ENCODE measurements at regions of chr3 and their contacts with region 1.

Region 1: DNA sequence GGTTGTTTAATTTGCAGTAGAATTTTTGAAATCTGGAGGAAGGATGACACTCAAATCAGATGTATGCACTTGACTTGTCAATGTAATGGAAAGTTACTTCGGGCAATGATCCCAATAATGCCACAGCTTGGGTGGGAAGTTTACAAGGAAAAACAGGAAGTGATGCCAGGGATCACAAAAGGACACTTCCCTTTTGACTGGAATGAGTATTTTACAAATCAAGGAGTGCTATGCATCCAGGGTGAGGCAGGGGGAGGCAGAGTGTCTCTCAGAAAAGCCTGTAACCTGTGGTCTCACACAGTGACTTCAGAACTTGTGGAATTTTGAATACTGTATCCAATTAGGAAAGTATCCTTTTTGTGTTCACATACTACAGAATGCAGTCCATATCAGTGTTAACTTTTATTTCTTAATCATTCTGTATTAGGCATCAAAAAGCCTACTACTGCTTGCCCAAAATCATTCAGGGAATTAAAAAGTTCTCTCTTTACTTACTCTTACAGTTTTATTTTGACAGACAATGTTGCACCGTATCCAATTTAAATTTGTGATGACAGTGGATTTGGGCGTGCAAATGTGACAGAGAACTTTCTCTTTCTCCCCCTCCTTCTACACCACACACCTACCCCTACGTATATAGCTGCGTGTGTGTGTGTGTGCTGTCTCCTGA is 445.1 kb downstream of the MECOM start:
- DNase-seq: peak; percentile 71
- ATAC-seq: peak; percentile 95
- H3K4me3 ChIP-seq: no peak overlapping the region
- H3K27ac ChIP-seq: no peak overlapping the region
- H3K4me1 ChIP-seq: no peaks in the 10 kb centered on the region
- H3K27me3 ChIP-seq: no peaks in the 10 kb centered on the region
- CTCF ChIP-seq: peak; percentile 85
- POLR2A ChIP-seq: no peak
- RAD21 ChIP-seq: peak; percentile 88

Region 2: GRCh38 chr3:169295126-169295525 is 76.7 kb after region 1 on chr3:
- CTCF ChIA-PET with region 1: no interaction called
- POLR2A ChIA-PET with region 1: no interaction called
- dilution Hi-C with region 1: no loop called
- in situ Hi-C with region 1: no loop called
- intact Hi-C with region 1: loop called (anchors 2 kb)
- DNase-seq: peak; percentile 42
- ATAC-seq: no peak
- H3K4me3 ChIP-seq: no peak overlapping the region
- H3K27ac ChIP-seq: no peak overlapping the region
- H3K4me1 ChIP-seq: no peaks in the 10 kb centered on the region
- H3K27me3 ChIP-seq: peaks cover 2% of the 10 kb centered on the region; the same call in 1 of the 2 replicates
- CTCF ChIP-seq: peak; percentile 66
- POLR2A ChIP-seq: no peak
- RAD21 ChIP-seq: peak; percentile 67

Region 3: GRCh38 chr3:169390271-169391230 is 172.1 kb after region 1 on chr3:
- CTCF ChIA-PET with region 1: no interaction called
- POLR2A ChIA-PET with region 1: no interaction called
- dilution Hi-C with region 1: no loop called
- in situ Hi-C with region 1: no loop called
- intact Hi-C with region 1: loop called (anchors 5 kb)
- DNase-seq: no peak
- ATAC-seq: peak; percentile 31; the same call in 1 of the 2 replicates
- H3K4me3 ChIP-seq: no peak overlapping the region
- H3K27ac ChIP-seq: no peak overlapping the region
- H3K4me1 ChIP-seq: peaks cover 1% of the 10 kb centered on the region; the same call in 1 of the 2 replicates
- H3K27me3 ChIP-seq: no peaks in the 10 kb centered on the region
- CTCF ChIP-seq: no peak
- POLR2A ChIP-seq: no peak
- RAD21 ChIP-seq: no peak

Region 4: DNA sequence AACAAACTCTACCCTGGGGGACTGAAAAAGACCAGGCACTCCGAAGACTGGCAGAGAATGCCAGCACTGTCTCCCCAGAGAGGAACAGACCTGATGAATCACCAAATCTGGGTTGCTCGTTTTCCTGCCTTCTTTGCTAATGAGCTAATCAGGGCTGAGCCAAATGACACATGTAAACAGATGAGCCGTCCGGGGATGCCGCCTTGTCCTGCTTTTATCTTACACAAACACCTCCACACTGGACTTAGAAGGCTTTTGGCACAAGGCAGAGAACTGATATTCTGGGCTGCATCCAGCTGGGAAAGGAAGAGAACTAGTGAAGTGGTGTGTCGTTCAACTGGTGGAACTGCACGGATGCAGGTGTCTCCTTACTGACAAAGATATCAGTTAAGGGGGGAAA is 356.9 kb after region 1 on chr3:
- CTCF ChIA-PET with region 1: no interaction called
- POLR2A ChIA-PET with region 1: no interaction called
- dilution Hi-C with region 1: no loop called
- in situ Hi-C with region 1: no loop called
- intact Hi-C with region 1: loop called (anchors 10 kb)
- DNase-seq: peak; percentile 45
- ATAC-seq: peak; percentile 66
- H3K4me3 ChIP-seq: no peak overlapping the region
- H3K27ac ChIP-seq: no peak overlapping the region
- H3K4me1 ChIP-seq: no peaks in the 10 kb centered on the region; the same call in 1 of the 2 replicates
- H3K27me3 ChIP-seq: no peaks in the 10 kb centered on the region
- CTCF ChIP-seq: no peak
- POLR2A ChIP-seq: no peak
- RAD21 ChIP-seq: no peak

Region 5: DNA sequence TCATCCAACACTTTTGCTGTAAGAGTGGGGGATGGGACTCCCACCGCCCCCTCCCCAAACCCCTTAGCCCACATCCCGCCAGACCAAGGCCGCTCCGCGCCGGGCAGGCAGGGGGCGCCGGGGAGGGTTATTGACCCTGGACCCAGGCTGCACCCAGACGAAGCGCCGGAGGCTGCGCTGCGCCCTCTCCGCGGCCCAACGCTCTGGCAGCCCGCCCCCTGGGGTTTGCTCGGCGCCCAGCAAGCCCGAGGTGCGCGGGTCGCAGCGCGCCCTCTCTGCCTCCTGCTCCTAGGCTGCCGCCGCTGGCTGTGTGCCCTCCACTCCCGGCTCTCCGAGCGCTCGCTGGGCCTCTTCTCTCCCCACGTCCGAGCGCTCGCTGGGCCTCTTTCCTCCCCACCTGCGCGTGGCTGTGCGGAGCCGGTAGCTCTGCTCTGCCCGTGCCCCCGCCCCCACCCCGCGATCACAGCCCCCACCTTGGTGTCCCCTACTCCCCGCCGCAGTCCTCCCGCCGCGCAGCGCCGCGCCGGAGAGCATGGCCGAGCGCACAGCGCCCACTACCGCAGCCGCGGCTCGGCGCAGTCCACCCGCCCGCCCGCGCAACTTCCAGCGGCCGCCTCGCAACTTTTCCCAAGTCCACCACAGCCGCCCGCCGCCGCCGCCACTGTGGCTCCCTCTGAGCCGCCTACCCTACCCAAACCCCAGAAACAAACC is 443.8 kb after region 1 on chr3:
- CTCF ChIA-PET with region 1: interaction called, 3 read pairs
- POLR2A ChIA-PET with region 1: no interaction called
- dilution Hi-C with region 1: no loop called
- in situ Hi-C with region 1: no loop called
- intact Hi-C with region 1: loop called (anchors 1 kb)
- DNase-seq: peak; percentile 57
- ATAC-seq: peak; percentile 86
- H3K4me3 ChIP-seq: peak overlapping the region; percentile 68
- H3K27ac ChIP-seq: peak overlapping the region; percentile 36
- H3K4me1 ChIP-seq: no peaks in the 10 kb centered on the region
- H3K27me3 ChIP-seq: peaks cover 35% of the 10 kb centered on the region
- CTCF ChIP-seq: peak; percentile 60
- POLR2A ChIP-seq: no peak
- RAD21 ChIP-seq: peak; percentile 61

Region 6: DNA sequence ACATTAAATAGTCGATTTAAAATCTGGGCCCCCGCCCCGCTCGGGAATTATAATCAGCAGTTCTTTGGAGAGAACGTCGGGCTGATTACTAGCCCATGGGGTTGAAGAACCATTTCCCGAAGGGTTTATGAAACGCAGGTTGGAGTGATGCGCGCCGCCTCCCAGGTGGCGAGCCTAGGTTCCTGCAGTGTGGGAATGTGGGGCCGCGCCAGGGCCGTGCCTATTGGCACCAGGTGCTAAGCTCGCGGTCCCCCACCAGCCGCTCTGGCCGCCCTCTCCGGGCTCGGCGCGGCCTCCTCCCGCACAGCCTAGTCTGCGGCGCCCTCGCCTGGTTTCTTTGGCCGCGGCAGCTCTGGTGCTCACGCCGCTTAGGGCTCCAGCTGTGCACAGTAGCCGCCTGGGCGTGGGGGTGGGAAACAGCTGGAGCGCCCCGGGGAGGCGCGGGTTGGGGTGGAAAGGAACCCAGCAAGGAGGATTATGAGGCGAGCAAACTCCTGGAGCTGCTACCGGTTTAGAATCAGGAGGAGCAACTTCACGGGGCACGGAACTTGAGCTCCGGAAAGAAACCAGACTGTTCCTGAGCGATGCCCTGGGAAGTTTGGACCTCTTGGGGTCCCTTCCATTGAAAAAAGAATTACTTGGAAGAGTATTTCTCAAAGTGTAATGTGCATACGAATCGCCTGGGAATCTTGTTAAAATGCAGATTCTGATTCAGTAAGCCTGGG is 450.7 kb after region 1 on chr3:
- CTCF ChIA-PET with region 1: interaction called, 5 read pairs
- POLR2A ChIA-PET with region 1: no interaction called
- dilution Hi-C with region 1: no loop called
- in situ Hi-C with region 1: no loop called
- intact Hi-C with region 1: loop called (anchors 1 kb)
- DNase-seq: peak; percentile 50
- ATAC-seq: peak; percentile 99
- H3K4me3 ChIP-seq: peak overlapping the region; percentile 41
- H3K27ac ChIP-seq: no peak overlapping the region
- H3K4me1 ChIP-seq: no peaks in the 10 kb centered on the region
- H3K27me3 ChIP-seq: peaks cover 43% of the 10 kb centered on the region
- CTCF ChIP-seq: peak; percentile 82
- POLR2A ChIP-seq: no peak
- RAD21 ChIP-seq: peak; percentile 91